ENCODE measurements at regions of chr6 and their contacts with region 1.

Region 1: GRCh38 chr6:106792536-106793236 is 163.3 kb downstream of the QRSL1 start:
- DNase-seq: no peak
- ATAC-seq: no peak
- H3K4me3 Mint-ChIP-seq: no peak overlapping the region
- H3K27ac Mint-ChIP-seq: no peak overlapping the region
- H3K4me1 Mint-ChIP-seq: peaks cover 8% of the 10 kb centered on the region; the same call in 1 of the 2 replicates
- H3K27me3 Mint-ChIP-seq: no peaks in the 10 kb centered on the region
- CTCF ChIP-seq: no peak

Region 2: GRCh38 chr6:106763361-106763760 is 29.3 kb before region 1 on chr6:
- CTCF ChIA-PET with region 1: no interaction called
- POLR2A ChIA-PET with region 1: interaction called, 10 read pairs
- DNase-seq: no peak
- ATAC-seq: no peak
- H3K4me3 Mint-ChIP-seq: no peak overlapping the region
- H3K27ac Mint-ChIP-seq: no peak overlapping the region
- H3K4me1 Mint-ChIP-seq: no peaks in the 10 kb centered on the region
- H3K27me3 Mint-ChIP-seq: no peaks in the 10 kb centered on the region
- CTCF ChIP-seq: no peak

Region 3: DNA sequence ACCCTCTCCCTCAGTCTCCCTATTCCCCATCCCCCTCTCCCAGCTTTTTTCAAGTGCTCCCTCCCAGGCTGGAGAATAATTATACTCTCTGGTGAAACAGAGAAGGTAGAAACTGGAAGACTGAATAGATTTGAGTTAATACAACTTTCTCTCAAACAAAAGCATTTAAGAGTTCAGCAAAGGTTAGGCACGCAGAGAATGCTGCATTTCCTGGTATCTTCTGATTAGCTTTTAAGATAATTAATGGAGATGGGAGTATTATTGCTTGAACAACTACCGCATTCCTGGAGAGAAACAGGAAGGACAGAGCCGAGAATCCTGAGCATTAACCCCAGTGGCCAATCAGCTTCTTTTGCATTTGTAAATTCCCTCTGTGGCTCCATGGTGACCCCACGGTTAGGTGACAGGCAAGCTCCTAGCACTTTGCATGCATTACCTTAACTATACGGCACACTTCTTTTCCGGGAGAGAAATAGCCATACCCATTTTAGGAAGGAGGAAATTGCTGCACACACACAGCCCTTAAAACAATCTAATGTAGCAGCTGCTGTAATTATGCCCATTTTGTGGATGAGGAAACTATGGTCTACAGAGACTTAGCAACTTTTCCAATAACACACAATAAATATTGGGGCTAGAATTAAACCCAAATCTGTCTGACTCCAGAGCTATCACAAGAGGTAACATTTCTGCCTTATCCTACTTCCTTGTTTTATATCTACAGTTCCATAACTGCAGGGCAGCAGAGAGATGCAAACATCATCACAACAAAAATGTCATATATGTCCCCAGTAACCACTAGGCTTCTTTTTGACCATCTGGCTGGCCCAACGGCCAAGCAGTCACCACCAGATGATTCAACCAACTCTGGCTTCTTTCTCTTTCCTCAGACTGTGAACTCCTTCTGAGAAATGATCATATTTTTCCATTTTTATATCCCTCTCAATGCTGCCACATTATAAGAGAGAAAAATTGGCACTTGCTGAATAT is 12.0 kb after region 1 on chr6:
- CTCF ChIA-PET with region 1: no interaction called
- POLR2A ChIA-PET with region 1: no interaction called
- DNase-seq: peak; percentile 41
- ATAC-seq: peak; percentile 90
- H3K4me3 Mint-ChIP-seq: peak overlapping the region; percentile 44
- H3K27ac Mint-ChIP-seq: peak overlapping the region; percentile 97
- H3K4me1 Mint-ChIP-seq: peaks cover 54% of the 10 kb centered on the region
- H3K27me3 Mint-ChIP-seq: peaks cover 16% of the 10 kb centered on the region
- CTCF ChIP-seq: no peak

Region 4: DNA sequence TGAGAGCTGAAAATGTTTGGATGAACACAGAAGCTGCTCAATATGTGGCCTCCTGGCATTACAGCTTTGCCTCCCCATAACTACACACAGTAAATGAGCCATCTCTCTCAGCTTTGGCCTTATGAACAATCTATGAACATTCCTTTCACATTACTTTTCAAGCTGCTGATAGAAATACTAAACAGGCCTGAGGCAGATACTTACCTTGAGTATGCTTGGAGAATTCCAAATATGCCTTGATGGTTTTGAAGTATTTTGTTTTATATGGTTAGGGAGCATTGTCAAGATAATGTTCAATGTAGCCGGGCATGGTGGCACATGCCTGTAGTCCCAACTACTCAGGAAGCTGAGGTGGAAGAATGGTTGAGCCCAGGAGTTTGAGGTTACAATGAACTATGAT is 77.4 kb after region 1 on chr6:
- CTCF ChIA-PET with region 1: no interaction called
- POLR2A ChIA-PET with region 1: no interaction called
- DNase-seq: no peak
- ATAC-seq: no peak
- H3K4me3 Mint-ChIP-seq: no peak overlapping the region
- H3K27ac Mint-ChIP-seq: no peak overlapping the region
- H3K4me1 Mint-ChIP-seq: peaks cover 34% of the 10 kb centered on the region
- H3K27me3 Mint-ChIP-seq: peaks cover 2% of the 10 kb centered on the region
- CTCF ChIP-seq: no peak

Measured in WTC11 (cell line).